Gastrocnemius medialis (tissue), 4 donors: ENCODE measurements at regions of chr5 and their contacts with region 1.

Region 1: DNA sequence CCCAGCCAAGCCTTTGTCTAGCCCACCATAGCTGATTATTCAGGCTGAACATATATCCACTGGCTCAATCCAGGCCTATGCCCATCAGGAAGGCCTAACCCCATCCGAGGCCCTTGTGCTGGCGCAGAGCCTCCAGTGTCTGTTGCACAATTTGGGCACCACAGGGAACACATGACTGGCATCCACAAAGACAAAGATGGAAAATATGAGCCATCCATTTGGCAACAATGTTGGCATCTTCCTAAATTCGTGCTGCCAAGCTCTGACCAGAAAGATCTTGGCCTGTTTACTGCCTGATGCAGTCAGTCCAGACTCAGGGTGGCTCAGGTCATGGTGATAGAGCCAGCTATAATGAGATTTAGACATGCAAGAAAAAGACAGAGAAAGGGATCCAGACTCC is 233.8 kb downstream of the PIK3R1 start:
- DNase-seq: peak; percentile 66 to 88
- ATAC-seq: peak; percentile 97 to 98
- H3K4me3 ChIP-seq: no peak overlapping the region
- H3K27ac ChIP-seq: peak overlapping the region; percentile 68 to 83 (median 78)
- H3K4me1 ChIP-seq: peaks cover 19 to 29% of the 10 kb centered on the region in 2 donors
- H3K27me3 ChIP-seq: no peaks in the 10 kb centered on the region
- CTCF ChIP-seq: no peak
- POLR2A ChIP-seq: peak in 1 of 2 donors; percentile 13

Region 2: GRCh38 chr5:68343421-68343826 is 106.0 kb before region 1 on chr5:
- in situ Hi-C with region 1: no loop called
- intact Hi-C with region 1: loop called (anchors 2 kb)
- DNase-seq: peak; percentile 85 to 89
- ATAC-seq: peak; percentile 98 to 99
- H3K4me3 ChIP-seq: no peak overlapping the region
- H3K27ac ChIP-seq: peak overlapping the region; percentile 57 to 76 (median 68)
- H3K4me1 ChIP-seq: peaks cover 7 to 20% of the 10 kb centered on the region in 2 donors
- H3K27me3 ChIP-seq: no peaks in the 10 kb centered on the region
- CTCF ChIP-seq: no peak
- POLR2A ChIP-seq: no peak